ENCODE measurements at regions of chr7 and their contacts with region 1.

Region 1: GRCh38 chr7:26667500-26668133 is 196.8 kb downstream of the SKAP2 start:
- DNase-seq: peak; percentile 94
- ATAC-seq: peak; percentile 100
- H3K4me3 ChIP-seq: no peak overlapping the region
- H3K27ac ChIP-seq: no peak overlapping the region
- H3K4me1 ChIP-seq: 0 out of 4 replicates have a peak, but pooled peaks cover 0 to 2% of the 10 kb centered on the region in 2 experiments
- H3K27me3 ChIP-seq: no peaks in the 10 kb centered on the region
- CTCF ChIP-seq: peak; percentile 82 to 99 (median 96)
- POLR2A ChIP-seq: no peak
- RAD21 ChIP-seq: peak; percentile 100

Region 2: DNA sequence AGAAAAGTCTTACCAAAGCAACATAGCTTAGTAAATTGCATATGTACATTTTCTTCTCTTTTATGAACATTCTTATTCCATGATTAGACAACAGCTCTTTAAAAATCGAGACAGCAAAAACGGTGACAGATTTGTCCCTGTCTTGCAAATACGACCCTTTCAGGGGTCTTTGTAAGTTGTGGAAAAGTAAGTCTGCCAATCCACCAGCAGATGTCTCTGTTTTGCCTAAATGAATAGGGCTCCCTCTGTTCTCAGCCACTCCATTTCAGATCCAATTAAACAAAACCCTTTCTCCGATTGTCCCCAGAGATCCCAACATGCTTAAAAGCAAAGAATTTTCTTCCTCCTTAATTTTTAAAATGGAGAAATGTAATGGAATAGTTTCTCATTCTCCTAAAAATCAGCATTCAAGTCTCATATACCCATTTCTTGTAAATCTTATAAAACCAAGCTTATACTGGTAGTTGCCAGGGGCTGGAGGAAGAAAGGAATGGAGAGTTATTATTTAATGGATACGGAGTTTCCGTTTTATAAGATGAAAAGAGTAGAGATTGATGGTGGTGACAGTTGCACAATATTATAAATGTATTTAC is 576.6 kb before region 1 on chr7:
- CTCF ChIA-PET with region 1: interaction called, 4 read pairs
- POLR2A ChIA-PET with region 1: no interaction called
- RAD21 ChIA-PET with region 1: no interaction called
- intact Hi-C with region 1: loop called (anchors 5 kb)
- DNase-seq: peak; percentile 59
- ATAC-seq: peak; percentile 84
- H3K4me3 ChIP-seq: 0 out of 4 replicates have a peak overlapping the region, but pooled peaks of 1 of the 2 experiments have one; percentile 14
- H3K27ac ChIP-seq: no peak overlapping the region
- H3K4me1 ChIP-seq: peaks cover 0 to 3% of the 10 kb centered on the region in 2 experiments; a peak in 1 of 4 replicates
- H3K27me3 ChIP-seq: no peaks in the 10 kb centered on the region
- CTCF ChIP-seq: peak; percentile 63 to 82 (median 81)
- POLR2A ChIP-seq: no peak
- RAD21 ChIP-seq: peak; percentile 79

Region 3: DNA sequence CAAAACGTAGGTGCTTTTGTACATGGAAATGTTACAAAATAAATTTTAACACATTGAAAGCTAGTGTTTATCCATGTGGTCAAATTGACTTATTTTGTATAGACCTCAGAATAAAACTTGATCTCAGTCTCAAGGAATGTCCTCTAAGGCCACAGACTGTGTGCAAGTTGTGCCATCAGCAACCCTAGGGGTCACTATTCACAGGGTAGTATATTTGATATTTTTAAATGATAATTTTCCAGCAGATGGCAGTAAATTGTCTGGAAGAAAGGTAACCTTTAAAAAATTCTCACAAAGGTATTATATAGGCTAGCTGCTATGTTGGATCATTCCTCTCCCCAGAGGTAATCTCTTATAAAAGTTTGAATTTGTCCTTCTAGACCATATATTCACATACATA is 388.8 kb before region 1 on chr7:
- CTCF ChIA-PET with region 1: no interaction called
- POLR2A ChIA-PET with region 1: no interaction called
- RAD21 ChIA-PET with region 1: no interaction called
- intact Hi-C with region 1: loop called (anchors 10 kb)
- DNase-seq: peak; percentile 36
- ATAC-seq: peak; percentile 90
- H3K4me3 ChIP-seq: no peak overlapping the region
- H3K27ac ChIP-seq: no peak overlapping the region
- H3K4me1 ChIP-seq: no peaks in the 10 kb centered on the region
- H3K27me3 ChIP-seq: no peaks in the 10 kb centered on the region
- CTCF ChIP-seq: peak; percentile 60 to 98 (median 64)
- POLR2A ChIP-seq: no peak
- RAD21 ChIP-seq: peak; percentile 62

Region 4: DNA sequence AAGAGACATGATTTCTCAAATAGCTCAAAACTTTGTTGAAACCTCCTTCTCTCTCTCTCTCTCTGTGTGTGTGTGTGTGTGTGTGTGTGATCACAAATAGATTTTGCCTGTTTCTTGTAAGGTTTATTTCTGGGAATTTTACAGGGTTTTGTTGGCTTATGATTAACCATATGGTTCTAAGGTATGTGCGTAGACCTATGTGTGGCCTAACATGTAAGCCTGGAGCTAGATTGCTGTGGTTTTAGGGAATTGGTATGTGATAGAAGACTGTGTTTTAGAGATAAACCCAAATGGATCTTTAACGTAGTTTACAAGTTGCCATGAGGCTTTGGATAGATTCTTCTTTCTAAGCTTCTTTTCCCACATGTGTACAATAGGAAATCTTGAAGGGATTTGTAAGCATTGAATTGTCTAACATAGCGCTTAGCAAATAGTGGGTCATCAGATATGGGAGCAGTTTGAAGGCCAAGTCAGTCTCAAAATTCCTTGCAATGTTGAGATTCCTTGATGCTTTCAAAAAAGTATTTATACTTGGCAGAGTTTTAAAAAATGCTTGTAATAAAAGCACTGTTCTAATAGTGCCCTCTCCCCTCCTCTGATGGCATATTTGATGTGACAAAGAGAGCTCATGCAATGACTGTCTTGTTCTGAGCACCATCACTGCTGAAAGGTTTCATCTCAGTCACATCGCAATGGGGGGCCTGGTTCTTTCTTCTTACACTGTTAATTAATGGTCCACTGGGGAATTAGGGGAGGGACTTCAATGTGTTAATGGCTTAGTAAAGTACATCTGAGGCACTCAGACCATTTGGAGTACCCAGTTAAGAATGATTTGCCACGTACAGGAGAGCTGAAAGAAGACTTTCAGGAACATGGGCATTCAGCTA is 257.7 kb before region 1 on chr7:
- CTCF ChIA-PET with region 1: no interaction called
- POLR2A ChIA-PET with region 1: no interaction called
- RAD21 ChIA-PET with region 1: no interaction called
- intact Hi-C with region 1: no loop called
- DNase-seq: no peak
- ATAC-seq: no peak
- H3K4me3 ChIP-seq: no peak overlapping the region
- H3K27ac ChIP-seq: no peak overlapping the region
- H3K4me1 ChIP-seq: no peaks in the 10 kb centered on the region
- H3K27me3 ChIP-seq: no peaks in the 10 kb centered on the region
- CTCF ChIP-seq: no peak
- POLR2A ChIP-seq: no peak
- RAD21 ChIP-seq: no peak

Region 5: DNA sequence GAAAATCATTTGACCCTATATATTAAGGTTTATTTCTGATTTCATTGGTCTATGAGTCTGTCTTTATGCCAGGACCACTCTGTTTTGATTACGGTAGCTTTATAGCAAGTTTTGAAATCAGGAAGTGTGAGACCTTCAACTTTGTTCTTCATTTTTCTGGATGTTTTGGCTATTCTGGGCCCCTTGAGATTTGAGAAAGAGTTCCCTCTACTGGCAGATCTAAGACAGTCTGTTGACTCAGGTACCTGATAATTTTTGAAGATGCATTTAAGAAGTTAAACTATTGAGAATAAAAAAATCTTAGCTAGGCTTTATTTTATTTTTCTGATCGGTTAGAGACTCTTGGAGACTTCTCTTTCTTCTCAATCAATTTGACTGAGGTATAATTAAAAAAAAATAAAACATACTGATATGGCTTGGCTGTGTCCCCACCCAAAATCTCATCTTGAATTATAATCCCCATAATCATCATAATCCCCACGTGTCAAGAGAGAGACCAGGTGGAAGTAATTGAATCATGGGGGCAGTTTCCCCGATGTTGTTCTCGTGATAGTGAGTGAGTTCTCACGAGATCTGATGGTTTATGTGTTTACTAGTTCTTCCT is 166.8 kb before region 1 on chr7:
- CTCF ChIA-PET with region 1: interaction called, 4 read pairs
- POLR2A ChIA-PET with region 1: no interaction called
- RAD21 ChIA-PET with region 1: no interaction called
- intact Hi-C with region 1: loop called (anchors 5 kb)
- DNase-seq: peak; percentile 15
- ATAC-seq: peak; percentile 78
- H3K4me3 ChIP-seq: no peak overlapping the region
- H3K27ac ChIP-seq: no peak overlapping the region
- H3K4me1 ChIP-seq: no peaks in the 10 kb centered on the region
- H3K27me3 ChIP-seq: no peaks in the 10 kb centered on the region
- CTCF ChIP-seq: peak; percentile 58 to 67 (median 67); a peak in 5 of 6 replicates
- POLR2A ChIP-seq: no peak
- RAD21 ChIP-seq: peak; percentile 67

Measured in HCT116 (cell line).